ENCODE measurements at regions of chr6 and their contacts with region 1.

Region 1: GRCh38 chr6:31541658-31542521 is at the start of gene DDX39B:
- DNase-seq: peak; percentile 96
- H3K4me3 ChIP-seq: peak within 1 kb of the TSS; percentile 70
- H3K4me1 ChIP-seq: peaks cover 18% of the 10 kb centered on the region
- H3K27me3 ChIP-seq: no peaks in the 10 kb centered on the region

Region 2: DNA sequence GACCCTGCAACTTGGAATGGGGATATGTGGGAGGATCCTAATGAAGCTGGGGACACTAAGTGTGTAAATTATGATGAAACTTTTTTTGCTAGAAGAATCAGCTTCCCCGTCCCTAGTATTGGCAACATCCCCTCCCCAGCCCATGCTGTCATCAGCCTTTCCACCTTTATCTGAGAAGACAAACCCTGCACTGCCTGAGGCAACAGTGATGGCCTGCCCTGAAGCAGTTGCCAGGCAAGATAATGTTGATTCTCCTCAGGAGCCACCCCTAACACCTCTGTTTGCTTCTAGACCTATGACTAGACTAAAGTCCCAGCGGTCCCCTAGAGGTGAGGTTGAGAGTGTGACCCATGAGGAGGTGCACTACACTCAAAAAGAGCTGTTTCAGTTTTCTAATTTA is 111.4 kb before region 1 on chr6:
- in situ Hi-C with region 1: no loop called
- DNase-seq: no peak
- H3K4me3 ChIP-seq: no peak overlapping the region
- H3K4me1 ChIP-seq: no peaks in the 10 kb centered on the region
- H3K27me3 ChIP-seq: peaks cover 2% of the 10 kb centered on the region; the same call in 1 of the 2 replicates

Region 3: GRCh38 chr6:31493875-31494694 is 47.8 kb before region 1 on chr6:
- in situ Hi-C with region 1: loop called (anchors 5 kb)
- DNase-seq: peak; percentile 84 to 91
- H3K4me3 ChIP-seq: peak overlapping the region; percentile 59
- H3K4me1 ChIP-seq: peaks cover 24% of the 10 kb centered on the region
- H3K27me3 ChIP-seq: no peaks in the 10 kb centered on the region

Region 4: GRCh38 chr6:31834434-31835198 is 292.7 kb after region 1 on chr6:
- in situ Hi-C with region 1: loop called (anchors 5 kb)
- DNase-seq: peak; percentile 93 to 95
- H3K4me3 ChIP-seq: peak overlapping the region; percentile 100
- H3K4me1 ChIP-seq: peaks cover 21% of the 10 kb centered on the region
- H3K27me3 ChIP-seq: no peaks in the 10 kb centered on the region